CD8-positive, alpha-beta T cell (primary cell): ENCODE measurements at regions of chr17 and their contacts with region 1.

Region 1: GRCh38 chr17:7561028-7561575 is 617 bp upstream of the SENP3 start:
- DNase-seq: peak; percentile 67 to 89 (median 81)
- ATAC-seq: peak; percentile 68
- H3K4me3 ChIP-seq: peak overlapping the region; percentile 50 to 95
- H3K4me3 Mint-ChIP-seq: peak overlapping the region; percentile 94
- H3K27ac ChIP-seq: peak overlapping the region; percentile 91 to 97
- H3K27ac Mint-ChIP-seq: peak overlapping the region; percentile 99
- H3K4me1 ChIP-seq: peaks cover 49% of the 10 kb centered on the region
- H3K4me1 Mint-ChIP-seq: peaks cover 50% of the 10 kb centered on the region
- H3K27me3 ChIP-seq: no peaks in the 10 kb centered on the region
- H3K27me3 Mint-ChIP-seq: no peaks in the 10 kb centered on the region
- CTCF ChIP-seq: peak; percentile 85

Region 2: GRCh38 chr17:7239091-7240027 is 321.7 kb before region 1 on chr17 and contains the start of gene PHF23:
- CTCF ChIA-PET with region 1: interaction called, 3 read pairs
- POLR2A ChIA-PET with region 1: no interaction called
- intact Hi-C with region 1: loop called in 1 of 2 experiments (anchors 1 kb)
- DNase-seq: peak; percentile 93 to 99 (median 97)
- ATAC-seq: peak; percentile 64
- H3K4me3 ChIP-seq: peak within 1 kb of the TSS; percentile 87 to 90
- H3K4me3 Mint-ChIP-seq: peak within 1 kb of the TSS; percentile 98
- H3K27ac ChIP-seq: peak within 1 kb of the TSS; percentile 64 to 100
- H3K27ac Mint-ChIP-seq: peak within 1 kb of the TSS; percentile 90
- H3K4me1 ChIP-seq: peaks cover 37% of the 10 kb centered on the region
- H3K4me1 Mint-ChIP-seq: peaks cover 58% of the 10 kb centered on the region
- H3K27me3 ChIP-seq: no peaks in the 10 kb centered on the region
- H3K27me3 Mint-ChIP-seq: no peaks in the 10 kb centered on the region
- CTCF ChIP-seq: no peak
- total RNA-seq, gene PHF23: 2.8 to 3.1 TPM

Region 3: GRCh38 chr17:7444682-7445618 is 116.2 kb before region 1 on chr17 and contains the start of gene CHRNB1:
- CTCF ChIA-PET with region 1: interaction called, 15 read pairs
- POLR2A ChIA-PET with region 1: no interaction called
- intact Hi-C with region 1: no loop called
- DNase-seq: peak in 3 of 9 experiments; percentile 29 to 47 (median 30)
- ATAC-seq: peak; percentile 14
- H3K4me3 ChIP-seq: peak within 1 kb of the TSS; percentile 32 to 37
- H3K4me3 Mint-ChIP-seq: peak within 1 kb of the TSS; percentile 84
- H3K27ac ChIP-seq: no peak within 1 kb of the TSS
- H3K27ac Mint-ChIP-seq: no peak within 1 kb of the TSS
- H3K4me1 ChIP-seq: peaks cover 32% of the 10 kb centered on the region
- H3K4me1 Mint-ChIP-seq: peaks cover 30% of the 10 kb centered on the region
- H3K27me3 ChIP-seq: peaks cover 14 to 38% of the 10 kb centered on the region in 2 experiments
- H3K27me3 Mint-ChIP-seq: peaks cover 45% of the 10 kb centered on the region
- CTCF ChIP-seq: no peak
- total RNA-seq, gene CHRNB1: 3.0 to 4.5 TPM

Region 4: DNA sequence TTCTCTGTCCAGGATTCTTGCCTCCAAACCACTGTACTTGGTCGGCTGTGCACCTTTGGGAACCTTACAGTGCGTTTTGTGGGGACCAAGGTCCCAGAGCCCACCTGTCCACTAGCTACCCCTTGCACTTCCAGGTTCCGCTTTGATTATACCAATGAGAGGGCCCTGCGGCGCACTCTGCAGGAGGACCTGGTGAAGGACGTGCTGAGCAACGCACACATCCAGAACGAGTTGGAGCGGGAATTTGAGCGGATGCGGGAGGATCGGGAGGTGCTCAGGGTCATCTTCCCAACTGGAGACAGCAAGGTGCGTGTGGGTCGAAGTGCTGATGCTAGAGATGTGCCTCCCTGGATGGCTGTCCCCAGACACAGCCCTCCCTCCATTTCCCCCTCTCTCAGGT is 58.1 kb before region 1 on chr17:
- CTCF ChIA-PET with region 1: interaction called, 18 read pairs
- POLR2A ChIA-PET with region 1: no interaction called
- intact Hi-C with region 1: no loop called
- DNase-seq: peak in 2 of 9 experiments; percentile 34 to 47
- ATAC-seq: peak; percentile 41
- H3K4me3 ChIP-seq: no peak overlapping the region
- H3K4me3 Mint-ChIP-seq: no peak overlapping the region
- H3K27ac ChIP-seq: no peak overlapping the region
- H3K27ac Mint-ChIP-seq: no peak overlapping the region
- H3K4me1 ChIP-seq: no peaks in the 10 kb centered on the region
- H3K4me1 Mint-ChIP-seq: no peaks in the 10 kb centered on the region
- H3K27me3 ChIP-seq: no peaks in the 10 kb centered on the region
- H3K27me3 Mint-ChIP-seq: no peaks in the 10 kb centered on the region
- CTCF ChIP-seq: no peak

Region 5: DNA sequence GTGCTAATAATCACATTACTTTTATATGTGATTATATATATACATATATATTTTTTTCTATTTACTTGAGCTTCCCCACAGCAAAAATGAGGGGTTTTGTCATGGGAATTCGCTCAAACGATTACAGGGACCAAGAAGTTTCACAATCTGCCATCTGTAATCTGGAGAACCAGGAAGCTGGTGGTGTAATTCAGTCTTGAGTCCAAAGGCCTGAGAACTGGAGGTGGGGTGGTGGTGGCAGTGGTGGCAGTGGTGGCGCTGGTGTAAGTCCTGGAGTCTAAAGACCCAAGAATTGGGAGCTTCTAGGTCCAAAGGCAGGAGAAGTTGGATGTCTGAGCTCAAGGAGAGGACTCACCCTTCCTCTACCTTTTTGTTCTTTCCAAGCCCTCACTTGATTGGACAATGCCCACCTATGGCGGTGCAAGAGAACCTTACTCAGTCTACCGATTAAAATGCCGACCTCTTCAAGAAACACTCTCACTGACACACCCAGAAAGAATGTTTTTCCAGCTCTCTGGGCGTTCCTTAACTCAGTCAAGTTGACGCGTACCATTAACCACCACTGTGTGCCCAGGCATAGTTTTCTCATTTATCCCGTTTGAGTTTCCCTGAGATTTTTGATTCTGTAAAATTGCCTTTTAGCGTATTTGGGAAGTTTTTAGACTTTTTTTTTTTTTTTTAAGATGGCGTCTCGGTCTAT is 45.0 kb before region 1 on chr17:
- CTCF ChIA-PET with region 1: interaction called, 343 read pairs
- POLR2A ChIA-PET with region 1: interaction called, 21 read pairs
- intact Hi-C with region 1: loop called (anchors 1 kb)
- DNase-seq: no peak
- ATAC-seq: no peak
- H3K4me3 ChIP-seq: no peak overlapping the region
- H3K4me3 Mint-ChIP-seq: no peak overlapping the region
- H3K27ac ChIP-seq: no peak overlapping the region
- H3K27ac Mint-ChIP-seq: no peak overlapping the region
- H3K4me1 ChIP-seq: no peaks in the 10 kb centered on the region
- H3K4me1 Mint-ChIP-seq: peaks cover 2% of the 10 kb centered on the region
- H3K27me3 ChIP-seq: no peaks in the 10 kb centered on the region
- H3K27me3 Mint-ChIP-seq: no peaks in the 10 kb centered on the region
- CTCF ChIP-seq: no peak

Region 6: GRCh38 chr17:7548585-7549400 is 12.3 kb before region 1 on chr17 and contains the start of gene TNFSF12:
- CTCF ChIA-PET with region 1: interaction called, 44 read pairs
- POLR2A ChIA-PET with region 1: interaction called, 5 read pairs
- intact Hi-C with region 1: loop called in 1 of 2 experiments (anchors 1 kb)
- DNase-seq: peak in 8 of 9 experiments; percentile 45 to 80 (median 64)
- ATAC-seq: peak; percentile 49
- H3K4me3 ChIP-seq: peak within 1 kb of the TSS; percentile 64 to 92
- H3K4me3 Mint-ChIP-seq: peak within 1 kb of the TSS; percentile 84
- H3K27ac ChIP-seq: peak within 1 kb of the TSS; percentile 78 to 83
- H3K27ac Mint-ChIP-seq: peak within 1 kb of the TSS; percentile 90
- H3K4me1 ChIP-seq: peaks cover 56% of the 10 kb centered on the region
- H3K4me1 Mint-ChIP-seq: peaks cover 45% of the 10 kb centered on the region
- H3K27me3 ChIP-seq: no peaks in the 10 kb centered on the region
- H3K27me3 Mint-ChIP-seq: no peaks in the 10 kb centered on the region
- CTCF ChIP-seq: no peak
- total RNA-seq, gene TNFSF12: 11.3 to 13.1 TPM

Region 7: GRCh38 chr17:7589204-7589868 is 28.2 kb after region 1 on chr17:
- CTCF ChIA-PET with region 1: interaction called, 35 read pairs
- POLR2A ChIA-PET with region 1: interaction called, 7 read pairs
- intact Hi-C with region 1: loop called (anchors 1 kb)
- DNase-seq: peak; percentile 40 to 81 (median 68)
- ATAC-seq: peak; percentile 89
- H3K4me3 ChIP-seq: no peak overlapping the region
- H3K4me3 Mint-ChIP-seq: no peak overlapping the region
- H3K27ac ChIP-seq: no peak overlapping the region
- H3K27ac Mint-ChIP-seq: peak overlapping the region; percentile 41
- H3K4me1 ChIP-seq: peaks cover 14% of the 10 kb centered on the region
- H3K4me1 Mint-ChIP-seq: peaks cover 12% of the 10 kb centered on the region
- H3K27me3 ChIP-seq: no peaks in the 10 kb centered on the region
- H3K27me3 Mint-ChIP-seq: no peaks in the 10 kb centered on the region
- CTCF ChIP-seq: peak; percentile 61